WTC11 (cell line): ENCODE measurements at regions of chr22 and their contacts with region 1.

Region 1: GRCh38 chr22:23263651-23264555 is 83.6 kb downstream of the BCR start:
- DNase-seq: no peak
- ATAC-seq: no peak
- H3K4me3 Mint-ChIP-seq: no peak overlapping the region
- H3K27ac Mint-ChIP-seq: peak overlapping the region; percentile 72
- H3K4me1 Mint-ChIP-seq: peaks cover 45% of the 10 kb centered on the region
- H3K27me3 Mint-ChIP-seq: no peaks in the 10 kb centered on the region
- CTCF ChIP-seq: no peak

Region 2: DNA sequence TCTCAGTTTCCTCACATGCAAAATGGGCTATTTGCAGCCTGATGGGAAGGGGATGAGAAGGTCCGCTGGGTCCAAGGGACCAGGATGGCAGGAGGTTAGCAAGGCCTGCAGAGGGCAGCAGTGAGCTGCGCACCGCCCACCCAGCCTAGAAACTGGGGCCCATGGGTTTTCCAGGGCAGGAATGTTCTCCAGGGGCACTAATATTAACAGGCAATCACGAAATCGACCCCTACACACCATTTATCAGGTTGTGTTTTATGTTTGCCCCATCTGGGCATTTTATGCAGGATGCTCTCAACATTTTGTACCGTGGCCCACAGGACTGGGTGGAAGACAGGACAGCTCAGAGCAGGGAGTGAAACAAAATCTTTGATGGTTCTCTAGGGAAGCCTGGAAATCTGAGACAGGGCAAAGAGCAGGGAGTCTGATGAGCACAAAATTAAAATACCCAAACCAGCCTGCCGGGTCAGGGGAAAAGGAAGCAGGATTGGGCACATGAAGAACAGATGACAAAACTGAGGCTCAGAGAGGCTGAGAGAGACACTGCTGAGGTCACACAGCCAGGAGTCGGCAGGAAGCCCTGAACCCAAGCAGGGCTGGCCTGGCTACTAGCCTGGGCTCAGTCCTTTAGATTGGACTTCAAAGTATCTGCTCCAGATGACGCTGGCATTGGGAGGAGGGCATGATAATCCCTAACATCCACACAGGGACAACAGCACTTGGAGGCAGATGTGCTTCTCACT is 85.2 kb before region 1 on chr22:
- CTCF ChIA-PET with region 1: interaction called, 14 read pairs
- POLR2A ChIA-PET with region 1: interaction called, 3 read pairs
- DNase-seq: peak; percentile 84
- ATAC-seq: peak; percentile 57
- H3K4me3 Mint-ChIP-seq: no peak overlapping the region; the same call in 1 of the 2 replicates
- H3K27ac Mint-ChIP-seq: no peak overlapping the region
- H3K4me1 Mint-ChIP-seq: peaks cover 39% of the 10 kb centered on the region
- H3K27me3 Mint-ChIP-seq: no peaks in the 10 kb centered on the region; the same call in none of the 2 replicates
- CTCF ChIP-seq: peak; percentile 88

Region 3: GRCh38 chr22:23251445-23252232 is 12.3 kb before region 1 on chr22:
- CTCF ChIA-PET with region 1: interaction called, 13 read pairs
- POLR2A ChIA-PET with region 1: no interaction called
- DNase-seq: no peak
- ATAC-seq: no peak
- H3K4me3 Mint-ChIP-seq: no peak overlapping the region
- H3K27ac Mint-ChIP-seq: peak overlapping the region; percentile 19; the same call in 1 of the 2 replicates
- H3K4me1 Mint-ChIP-seq: peaks cover 65% of the 10 kb centered on the region
- H3K27me3 Mint-ChIP-seq: no peaks in the 10 kb centered on the region
- CTCF ChIP-seq: no peak

Region 4: GRCh38 chr22:23315341-23315917 is 51.5 kb after region 1 on chr22:
- CTCF ChIA-PET with region 1: no interaction called
- POLR2A ChIA-PET with region 1: no interaction called
- DNase-seq: peak; percentile 83
- ATAC-seq: peak; percentile 78
- H3K4me3 Mint-ChIP-seq: no peak overlapping the region
- H3K27ac Mint-ChIP-seq: peak overlapping the region; percentile 57; the same call in 1 of the 2 replicates
- H3K4me1 Mint-ChIP-seq: peaks cover 3% of the 10 kb centered on the region
- H3K27me3 Mint-ChIP-seq: no peaks in the 10 kb centered on the region
- CTCF ChIP-seq: peak; percentile 50; the same call in 1 of the 2 replicates

Region 5: DNA sequence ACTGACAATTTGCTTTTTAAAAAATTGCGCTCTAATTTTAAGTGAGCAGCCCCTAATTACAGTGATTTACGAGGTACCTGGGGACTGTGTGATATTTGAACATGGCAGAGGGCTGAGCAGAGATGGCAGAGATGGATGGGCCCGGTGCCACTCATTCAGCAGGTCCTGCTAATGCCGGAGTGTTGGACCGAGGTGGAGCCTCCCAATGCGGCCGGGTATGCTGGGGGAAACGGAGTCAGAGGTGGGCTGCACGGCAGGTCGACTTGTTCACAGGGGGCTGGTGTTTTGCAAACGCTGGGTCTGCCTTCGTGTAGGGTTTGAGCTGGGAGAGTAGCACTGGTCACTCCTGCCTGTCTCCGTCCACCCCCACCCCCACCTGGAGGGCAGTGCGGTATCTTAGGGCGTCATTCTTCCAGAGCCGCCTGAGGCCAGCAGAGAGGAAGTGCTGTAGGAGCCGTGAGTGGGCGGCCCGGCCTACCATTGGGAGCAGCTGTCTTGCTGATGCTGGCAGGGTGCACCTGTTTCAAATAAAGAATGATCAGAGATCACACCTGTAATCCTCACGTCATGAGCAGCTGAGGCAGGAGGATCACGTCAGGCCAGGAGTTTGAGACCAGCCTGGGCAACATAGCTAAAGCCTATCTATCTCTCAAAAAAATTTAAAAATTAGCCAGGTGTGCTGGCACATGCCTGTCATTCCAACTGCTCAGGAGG is 193.6 kb after region 1 on chr22:
- CTCF ChIA-PET with region 1: no interaction called
- POLR2A ChIA-PET with region 1: no interaction called
- DNase-seq: no peak
- ATAC-seq: no peak
- H3K4me3 Mint-ChIP-seq: no peak overlapping the region
- H3K27ac Mint-ChIP-seq: no peak overlapping the region
- H3K4me1 Mint-ChIP-seq: no peaks in the 10 kb centered on the region
- H3K27me3 Mint-ChIP-seq: peaks cover 3% of the 10 kb centered on the region; the same call in 1 of the 2 replicates
- CTCF ChIP-seq: no peak